Common myeloid progenitor, CD34-positive (primary cell): ENCODE measurements at regions of chr12 and their contacts with region 1.

Region 1: DNA sequence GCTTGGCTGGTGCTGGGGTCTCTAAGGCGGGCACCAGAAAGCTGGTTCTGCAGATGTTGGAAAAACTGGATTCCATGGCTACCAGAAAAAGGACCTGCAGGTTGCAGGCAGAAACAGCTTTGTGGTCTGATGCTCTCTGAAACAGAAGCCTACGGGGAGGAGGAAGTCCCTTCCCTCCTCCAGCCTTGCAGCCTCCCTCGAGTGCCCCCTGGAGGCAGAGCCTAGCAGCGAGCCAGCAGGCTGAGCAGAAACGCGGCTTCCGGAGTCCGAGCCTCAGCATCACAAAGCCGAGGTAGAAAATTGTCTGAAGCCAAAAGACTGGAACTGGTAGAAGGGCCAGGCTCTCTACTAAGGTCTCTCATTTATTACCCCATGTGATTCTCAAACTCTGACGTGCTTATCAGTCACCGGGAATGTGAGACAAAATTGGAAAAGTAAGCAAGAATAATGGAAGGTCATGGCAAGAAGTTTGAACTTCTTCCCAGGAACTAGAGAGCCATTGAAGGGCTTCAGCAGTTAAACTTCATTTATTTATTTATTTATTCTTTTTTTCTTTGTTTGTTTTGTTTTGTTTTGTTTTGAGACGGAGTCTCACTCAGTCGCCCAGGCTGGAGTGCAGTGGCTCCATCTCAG is 82.2 kb upstream of the CPSF6 start:
- DNase-seq: peak; percentile 84 to 92 (median 90)
- H3K4me3 ChIP-seq: peak overlapping the region in 6 of 7 experiments; percentile 26 to 68 (median 44)
- H3K27ac ChIP-seq: no peak overlapping the region
- H3K4me1 ChIP-seq: peaks cover 0 to 10% (median 6%) of the 10 kb centered on the region in 4 experiments
- H3K27me3 ChIP-seq: no peaks in the 10 kb centered on the region

Region 2: GRCh38 chr12:69168828-69169227 is 11.7 kb after region 1 on chr12:
- CTCF ChIA-PET with region 1: interaction called, 26 read pairs
- POLR2A ChIA-PET with region 1: no interaction called
- DNase-seq: no peak
- H3K4me3 ChIP-seq: no peak overlapping the region
- H3K27ac ChIP-seq: no peak overlapping the region
- H3K4me1 ChIP-seq: no peaks in the 10 kb centered on the region
- H3K27me3 ChIP-seq: no peaks in the 10 kb centered on the region

Region 3: DNA sequence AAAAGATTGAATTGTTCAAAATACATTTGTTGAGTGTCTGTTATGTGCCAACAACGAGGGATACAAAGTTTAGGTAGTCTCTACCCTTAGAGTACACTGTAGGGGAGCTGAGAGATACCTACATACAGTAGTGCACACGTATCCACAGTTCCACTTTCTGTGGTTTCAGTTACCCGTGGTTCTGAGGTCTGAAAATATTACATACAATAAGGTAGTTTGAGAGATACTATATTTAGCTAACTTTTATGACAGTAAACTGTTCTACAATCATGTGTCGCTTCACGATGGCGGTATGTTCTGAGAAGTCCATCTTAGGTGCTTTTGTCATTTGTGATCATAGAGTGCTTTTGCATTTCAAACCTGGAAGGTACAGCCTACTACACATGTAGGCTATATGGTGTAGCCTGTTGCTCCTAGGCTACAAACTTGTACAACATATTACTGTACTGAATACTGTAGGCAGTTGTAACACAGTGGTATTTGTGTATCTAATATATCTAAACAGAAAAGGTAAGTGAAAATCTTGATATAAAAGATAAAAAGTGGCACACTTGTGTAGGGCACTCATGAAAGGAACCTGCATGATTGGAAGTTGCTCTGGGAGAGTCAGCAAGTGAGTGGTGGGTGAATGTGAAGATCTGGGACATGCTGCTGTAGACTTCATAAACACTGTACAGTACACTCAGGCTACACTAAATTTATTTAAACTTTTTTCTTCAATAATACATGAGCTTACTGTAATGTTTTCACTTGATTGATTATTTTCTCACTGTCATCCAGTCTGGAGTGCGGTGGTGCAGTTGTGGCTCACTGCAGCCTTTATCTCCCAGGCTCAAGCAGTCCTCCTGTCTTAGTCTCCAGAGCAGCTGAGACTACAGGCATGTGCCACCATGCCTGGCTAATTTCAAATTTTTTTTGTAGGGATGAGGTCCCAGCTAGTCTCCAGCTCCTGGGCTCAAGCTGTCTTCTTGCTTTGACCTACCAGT is 86.3 kb after region 1 on chr12:
- CTCF ChIA-PET with region 1: interaction called, 10 read pairs
- POLR2A ChIA-PET with region 1: no interaction called
- DNase-seq: peak in 2 of 3 donors; percentile 48 to 57
- H3K4me3 ChIP-seq: peak overlapping the region in 4 of 7 experiments; percentile 2 to 44 (median 28)
- H3K27ac ChIP-seq: peak overlapping the region in 1 of 2 experiments; percentile 95
- H3K4me1 ChIP-seq: peaks cover 13 to 43% (median 30%) of the 10 kb centered on the region in 4 experiments
- H3K27me3 ChIP-seq: no peaks in the 10 kb centered on the region

Region 4: GRCh38 chr12:69254046-69254445 is 96.9 kb after region 1 on chr12:
- CTCF ChIA-PET with region 1: interaction called, 30 read pairs
- POLR2A ChIA-PET with region 1: no interaction called
- DNase-seq: peak; percentile 67 to 84 (median 81)
- H3K4me3 ChIP-seq: no peak overlapping the region
- H3K27ac ChIP-seq: no peak overlapping the region
- H3K4me1 ChIP-seq: peaks cover 0 to 2% (median 0%) of the 10 kb centered on the region in 4 experiments
- H3K27me3 ChIP-seq: no peaks in the 10 kb centered on the region